ENCODE measurements at regions of chr10 and their contacts with region 1.

Region 1: DNA sequence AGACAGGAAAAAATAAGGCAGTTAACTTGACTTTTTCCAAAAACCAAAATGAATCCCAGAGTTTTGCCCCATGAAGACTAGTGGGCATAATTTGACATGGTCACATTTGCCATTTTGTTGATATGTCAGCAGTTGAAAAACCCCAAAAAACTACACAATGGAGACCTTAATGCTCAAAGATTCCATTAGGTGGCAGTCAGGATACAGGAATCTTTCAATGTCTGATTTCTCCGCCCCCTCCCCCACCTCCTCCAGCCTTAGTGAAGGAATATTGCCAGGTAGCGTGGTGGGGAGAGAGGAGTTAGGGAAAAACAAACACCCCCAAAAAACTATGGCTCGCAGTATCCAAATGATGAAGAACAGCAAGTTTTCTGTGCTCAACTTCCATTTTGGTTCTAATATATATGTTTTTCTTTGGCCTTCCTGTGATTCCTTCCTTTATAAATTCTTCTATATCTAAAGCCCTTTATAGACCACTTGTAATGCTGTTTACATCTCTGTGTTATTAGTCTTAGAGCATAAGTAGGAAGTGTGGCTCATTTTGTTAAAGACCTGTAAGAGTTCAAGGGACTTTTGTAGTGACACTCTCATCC is 6.7 kb upstream of the SMNDC1 start:
- DNase-seq: peak; percentile 59 to 60
- H3K4me3 ChIP-seq: no peak overlapping the region
- H3K4me3 Mint-ChIP-seq: no peak overlapping the region
- H3K27ac Mint-ChIP-seq: no peak overlapping the region
- H3K4me1 ChIP-seq: peaks cover 7% of the 10 kb centered on the region
- H3K4me1 Mint-ChIP-seq: no peaks in the 10 kb centered on the region
- H3K27me3 ChIP-seq: no peaks in the 10 kb centered on the region
- H3K27me3 Mint-ChIP-seq: no peaks in the 10 kb centered on the region
- CTCF ChIP-seq: peak; percentile 65 to 83

Region 2: GRCh38 chr10:110326351-110327032 is 15.0 kb after region 1 on chr10:
- CTCF ChIA-PET with region 1: no interaction called
- POLR2A ChIA-PET with region 1: no interaction called
- intact Hi-C with region 1: loop called (anchors 1 kb)
- DNase-seq: no peak
- H3K4me3 ChIP-seq: no peak overlapping the region
- H3K4me3 Mint-ChIP-seq: no peak overlapping the region
- H3K27ac Mint-ChIP-seq: peak overlapping the region; percentile 11
- H3K4me1 ChIP-seq: peaks cover 41% of the 10 kb centered on the region
- H3K4me1 Mint-ChIP-seq: peaks cover 34% of the 10 kb centered on the region
- H3K27me3 ChIP-seq: no peaks in the 10 kb centered on the region
- H3K27me3 Mint-ChIP-seq: no peaks in the 10 kb centered on the region
- CTCF ChIP-seq: no peak

Region 3: GRCh38 chr10:110354322-110354766 is 42.9 kb after region 1 on chr10:
- CTCF ChIA-PET with region 1: no interaction called
- POLR2A ChIA-PET with region 1: no interaction called
- intact Hi-C with region 1: loop called (anchors 2 kb)
- DNase-seq: peak; percentile 75
- H3K4me3 ChIP-seq: no peak overlapping the region
- H3K4me3 Mint-ChIP-seq: no peak overlapping the region
- H3K27ac Mint-ChIP-seq: no peak overlapping the region
- H3K4me1 ChIP-seq: peaks cover 31% of the 10 kb centered on the region
- H3K4me1 Mint-ChIP-seq: peaks cover 7% of the 10 kb centered on the region
- H3K27me3 ChIP-seq: no peaks in the 10 kb centered on the region
- H3K27me3 Mint-ChIP-seq: no peaks in the 10 kb centered on the region
- CTCF ChIP-seq: peak; percentile 58 to 72

Region 4: GRCh38 chr10:110414563-110415309 is 103.3 kb after region 1 on chr10:
- CTCF ChIA-PET with region 1: no interaction called
- POLR2A ChIA-PET with region 1: no interaction called
- intact Hi-C with region 1: loop called (anchors 5 kb)
- DNase-seq: peak in 1 of 2 experiments; percentile 51
- H3K4me3 ChIP-seq: no peak overlapping the region
- H3K4me3 Mint-ChIP-seq: no peak overlapping the region
- H3K27ac Mint-ChIP-seq: peak overlapping the region; percentile 84
- H3K4me1 ChIP-seq: peaks cover 61% of the 10 kb centered on the region
- H3K4me1 Mint-ChIP-seq: peaks cover 46% of the 10 kb centered on the region
- H3K27me3 ChIP-seq: no peaks in the 10 kb centered on the region
- H3K27me3 Mint-ChIP-seq: no peaks in the 10 kb centered on the region
- CTCF ChIP-seq: no peak

Region 5: DNA sequence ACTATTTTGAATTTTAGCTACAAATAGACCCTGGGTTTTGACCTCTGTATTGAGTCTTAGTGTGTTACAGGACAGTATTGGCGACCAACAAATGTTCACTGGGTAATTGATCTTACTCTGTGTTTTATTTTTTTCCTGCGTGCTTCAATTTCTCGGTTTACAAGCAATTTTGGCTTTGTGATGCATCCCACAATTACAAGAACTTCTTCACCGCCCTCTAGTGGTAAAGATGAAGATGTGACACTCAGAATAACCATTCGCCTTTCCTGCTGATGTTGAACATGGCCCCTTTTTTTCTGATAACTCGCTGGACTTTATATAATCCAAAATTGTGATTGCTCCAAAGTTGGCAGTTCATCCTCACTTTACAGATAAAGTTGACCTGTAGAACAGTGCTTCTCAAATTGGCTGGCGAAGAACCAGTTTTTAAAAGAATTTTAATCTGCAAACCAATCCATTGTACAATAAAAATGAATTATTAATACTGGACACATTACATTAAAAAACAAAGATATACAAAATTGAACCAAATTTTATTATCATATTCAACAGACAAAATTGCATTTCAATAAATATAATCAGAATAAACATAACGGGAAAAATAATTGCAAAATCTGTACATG is 235.8 kb after region 1 on chr10:
- CTCF ChIA-PET with region 1: interaction called, 4 read pairs
- POLR2A ChIA-PET with region 1: interaction called, 3 read pairs
- intact Hi-C with region 1: loop called (anchors 1 kb)
- DNase-seq: peak in 1 of 2 experiments; percentile 45
- H3K4me3 ChIP-seq: no peak overlapping the region
- H3K4me3 Mint-ChIP-seq: no peak overlapping the region
- H3K27ac Mint-ChIP-seq: no peak overlapping the region
- H3K4me1 ChIP-seq: no peaks in the 10 kb centered on the region
- H3K4me1 Mint-ChIP-seq: peaks cover 11% of the 10 kb centered on the region
- H3K27me3 ChIP-seq: no peaks in the 10 kb centered on the region
- H3K27me3 Mint-ChIP-seq: no peaks in the 10 kb centered on the region
- CTCF ChIP-seq: peak; percentile 85 to 89

Region 6: GRCh38 chr10:110600487-110601101 is 289.1 kb after region 1 on chr10:
- CTCF ChIA-PET with region 1: interaction called, 12 read pairs
- POLR2A ChIA-PET with region 1: no interaction called
- intact Hi-C with region 1: loop called (anchors 1 kb)
- DNase-seq: peak; percentile 54 to 72
- H3K4me3 ChIP-seq: no peak overlapping the region
- H3K4me3 Mint-ChIP-seq: no peak overlapping the region
- H3K27ac Mint-ChIP-seq: no peak overlapping the region
- H3K4me1 ChIP-seq: no peaks in the 10 kb centered on the region
- H3K4me1 Mint-ChIP-seq: no peaks in the 10 kb centered on the region
- H3K27me3 ChIP-seq: no peaks in the 10 kb centered on the region
- H3K27me3 Mint-ChIP-seq: no peaks in the 10 kb centered on the region
- CTCF ChIP-seq: peak; percentile 61 to 76

Measured in Caco-2 (cell line).